Gastrocnemius medialis (tissue), 4 donors: ENCODE measurements at regions of chr19 and their contacts with region 1.

Region 1: DNA sequence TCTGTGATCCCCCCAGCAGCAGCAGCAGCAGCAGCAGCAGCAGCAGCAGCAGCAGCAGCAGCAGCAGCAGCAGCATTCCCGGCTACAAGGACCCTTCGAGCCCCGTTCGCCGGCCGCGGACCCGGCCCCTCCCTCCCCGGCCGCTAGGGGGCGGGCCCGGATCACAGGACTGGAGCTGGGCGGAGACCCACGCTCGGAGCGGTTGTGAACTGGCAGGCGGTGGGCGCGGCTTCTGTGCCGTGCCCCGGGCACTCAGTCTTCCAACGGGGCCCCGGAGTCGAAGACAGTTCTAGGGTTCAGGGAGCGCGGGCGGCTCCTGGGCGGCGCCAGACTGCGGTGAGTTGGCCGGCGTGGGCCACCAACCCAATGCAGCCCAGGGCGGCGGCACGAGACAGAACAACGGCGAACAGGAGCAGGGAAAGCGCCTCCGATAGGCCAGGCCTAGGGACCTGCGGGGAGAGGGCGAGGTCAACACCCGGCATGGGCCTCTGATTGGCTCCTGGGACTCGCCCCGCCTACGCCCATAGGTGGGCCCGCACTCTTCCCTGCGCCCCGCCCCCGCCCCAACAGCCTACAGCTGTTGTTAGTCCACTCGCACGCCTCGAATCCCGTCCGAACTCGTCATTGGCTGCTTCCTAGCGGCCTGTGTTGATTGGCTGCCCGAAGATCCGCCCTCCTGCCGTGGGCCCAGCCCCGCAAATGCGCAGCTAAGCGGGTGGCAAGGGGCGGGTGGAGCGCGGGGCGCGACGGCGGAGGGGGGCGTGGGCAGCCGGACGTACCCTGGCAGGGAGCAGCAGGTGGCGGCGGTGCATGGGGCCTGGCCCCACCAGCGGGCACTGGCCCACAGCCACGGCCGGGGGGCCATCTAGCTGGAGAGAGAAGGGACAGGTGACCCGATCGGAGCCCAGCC is 1.4 kb upstream of the SIX5 start:
- DNase-seq: peak; percentile 98 to 99
- ATAC-seq: peak; percentile 57 to 64
- H3K4me3 ChIP-seq: peak overlapping the region; percentile 74 to 90 (median 82)
- H3K27ac ChIP-seq: peak overlapping the region; percentile 95 to 99 (median 97)
- H3K4me1 ChIP-seq: peaks cover 16 to 29% of the 10 kb centered on the region in 2 donors
- H3K27me3 ChIP-seq: no peaks in the 10 kb centered on the region
- CTCF ChIP-seq: peak; percentile 98 to 99 (median 99)
- POLR2A ChIP-seq: peak; percentile 65 to 79

Region 2: DNA sequence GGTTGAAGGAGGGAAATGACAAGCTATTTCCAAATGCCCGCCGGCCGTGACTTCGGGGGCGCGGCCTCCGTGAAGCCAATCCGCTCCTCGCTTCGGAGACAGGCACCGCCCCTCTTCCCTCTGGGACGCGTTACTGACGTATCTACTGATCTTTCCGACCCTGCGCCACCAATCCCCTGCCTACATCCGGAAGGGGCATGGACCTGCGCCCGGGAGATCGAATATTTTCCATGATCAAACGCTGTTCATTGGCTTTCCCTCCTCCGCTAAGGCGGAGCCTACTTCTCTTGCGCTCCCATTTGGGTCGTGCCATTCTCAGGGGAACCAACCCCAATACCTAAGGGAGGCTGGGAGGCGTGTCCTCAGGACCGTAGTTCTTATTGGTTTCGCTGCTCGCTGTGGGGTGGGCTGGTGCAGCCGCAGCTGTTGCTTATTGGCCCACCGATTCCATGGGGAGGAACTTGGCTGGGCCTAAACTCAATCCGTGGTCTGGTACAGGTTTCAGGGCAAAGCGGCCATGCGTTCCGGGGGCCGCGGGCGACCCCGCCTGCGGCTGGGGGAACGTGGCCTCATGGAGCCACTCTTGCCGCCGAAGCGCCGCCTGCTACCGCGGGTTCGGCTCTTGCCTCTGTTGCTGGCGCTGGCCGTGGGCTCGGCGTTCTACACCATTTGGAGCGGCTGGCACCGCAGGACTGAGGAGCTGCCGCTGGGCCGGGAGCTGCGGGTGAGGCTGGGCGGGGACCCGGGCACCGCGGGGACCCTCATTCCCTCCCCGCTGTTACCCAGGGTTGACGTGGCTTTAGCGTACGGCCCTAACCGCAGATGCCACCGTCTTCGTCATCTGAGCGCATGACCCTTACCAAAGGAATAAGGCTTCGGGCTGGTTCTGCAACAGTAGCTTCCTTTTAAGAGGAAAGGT is 78.0 kb before region 1 on chr19 and contains the start of gene QPCTL:
- in situ Hi-C with region 1: no loop called
- intact Hi-C with region 1: loop called (anchors 1 kb)
- DNase-seq: peak; percentile 96 to 97
- ATAC-seq: peak; percentile 92 to 94
- H3K4me3 ChIP-seq: peak within 1 kb of the TSS; percentile 77 to 97 (median 86)
- H3K27ac ChIP-seq: peak within 1 kb of the TSS; percentile 90 to 96 (median 94)
- H3K4me1 ChIP-seq: peaks cover 8 to 16% of the 10 kb centered on the region in 2 donors
- H3K27me3 ChIP-seq: no peaks in the 10 kb centered on the region
- CTCF ChIP-seq: no peak
- POLR2A ChIP-seq: peak; percentile 72 to 81
- total RNA-seq, gene QPCTL: 0.80 to 1.4 (median 0.97) TPM

Region 3: GRCh38 chr19:45730389-45731288 is 39.8 kb before region 1 on chr19 and contains the start of gene FBXO46:
- in situ Hi-C with region 1: no loop called
- intact Hi-C with region 1: loop called (anchors 5 kb)
- DNase-seq: peak; percentile 95 to 97
- ATAC-seq: peak; percentile 99 to 100
- H3K4me3 ChIP-seq: peak within 1 kb of the TSS; percentile 85 to 98 (median 92)
- H3K27ac ChIP-seq: peak within 1 kb of the TSS; percentile 83 to 90 (median 87)
- H3K4me1 ChIP-seq: peaks cover 9 to 10% of the 10 kb centered on the region in 2 donors
- H3K27me3 ChIP-seq: no peaks in the 10 kb centered on the region
- CTCF ChIP-seq: no peak
- POLR2A ChIP-seq: peak; percentile 52 to 82
- total RNA-seq, gene FBXO46: 6.6 to 14.3 (median 8.7) TPM

Region 4: GRCh38 chr19:45752639-45753038 is 17.8 kb before region 1 on chr19:
- in situ Hi-C with region 1: no loop called
- intact Hi-C with region 1: no loop called
- DNase-seq: no peak
- ATAC-seq: no peak
- H3K4me3 ChIP-seq: no peak overlapping the region
- H3K27ac ChIP-seq: no peak overlapping the region
- H3K4me1 ChIP-seq: no peaks in the 10 kb centered on the region
- H3K27me3 ChIP-seq: no peaks in the 10 kb centered on the region
- CTCF ChIP-seq: no peak
- POLR2A ChIP-seq: no peak

Region 5: GRCh38 chr19:45798995-45799517 is 28.6 kb after region 1 on chr19:
- in situ Hi-C with region 1: no loop called
- intact Hi-C with region 1: loop called (anchors 1 kb)
- DNase-seq: peak in 1 of 2 donors; percentile 61
- ATAC-seq: peak; percentile 87 to 91
- H3K4me3 ChIP-seq: no peak overlapping the region
- H3K27ac ChIP-seq: peak overlapping the region; percentile 64 to 76 (median 70)
- H3K4me1 ChIP-seq: peaks cover 10 to 17% of the 10 kb centered on the region in 2 donors
- H3K27me3 ChIP-seq: no peaks in the 10 kb centered on the region
- CTCF ChIP-seq: peak; percentile 86 to 97 (median 92)
- POLR2A ChIP-seq: no peak

Region 6: GRCh38 chr19:45886427-45887199 is 116.2 kb after region 1 on chr19:
- in situ Hi-C with region 1: no loop called
- intact Hi-C with region 1: loop called (anchors 5 kb)
- DNase-seq: peak; percentile 82 to 89
- ATAC-seq: peak; percentile 89 to 91
- H3K4me3 ChIP-seq: peak overlapping the region; percentile 63 to 84 (median 66)
- H3K27ac ChIP-seq: peak overlapping the region; percentile 86 to 95 (median 92)
- H3K4me1 ChIP-seq: peaks cover 34 to 43% of the 10 kb centered on the region in 2 donors
- H3K27me3 ChIP-seq: no peaks in the 10 kb centered on the region
- CTCF ChIP-seq: peak in 1 of 5 experiments; percentile 11
- POLR2A ChIP-seq: peak; percentile 49 to 63